ENCODE measurements at regions of chr1 and their contacts with region 1.

Region 1: DNA sequence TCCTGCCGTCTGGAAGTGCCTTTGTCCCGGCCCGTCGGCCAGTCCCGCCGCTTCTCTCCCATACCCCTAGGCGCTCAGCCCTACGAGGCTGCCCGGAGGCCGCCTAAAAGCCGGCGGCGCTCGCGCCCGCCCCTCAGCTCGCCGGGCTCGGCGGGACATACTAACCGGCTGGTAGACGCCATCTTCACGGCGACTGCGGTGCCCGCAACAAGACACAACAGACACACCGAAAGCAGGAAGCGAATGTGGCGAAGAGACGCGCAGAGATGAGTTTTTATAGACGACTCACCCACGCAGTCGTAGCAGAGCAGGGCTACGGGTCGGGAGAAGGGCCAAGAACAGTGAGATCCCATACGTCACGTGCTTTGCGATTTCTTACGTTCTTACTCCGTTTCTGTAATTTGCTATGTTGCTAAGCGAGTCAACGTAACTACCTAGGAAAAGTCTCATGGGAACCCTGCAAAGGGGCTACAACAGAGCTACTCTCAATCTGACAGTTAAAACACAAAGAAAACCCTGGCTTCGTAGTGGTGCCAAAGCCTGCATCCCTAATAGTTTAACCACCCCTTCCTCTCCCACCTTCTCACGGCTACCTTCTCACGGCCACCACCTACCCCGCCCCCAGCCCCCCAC is at the start of gene GTF2B:
- DNase-seq: peak; percentile 86 to 96 (median 94)
- ATAC-seq: peak; percentile 97
- H3K4me3 ChIP-seq: peak within 1 kb of the TSS; percentile 86
- H3K4me3 Mint-ChIP-seq: peak within 1 kb of the TSS; percentile 87 to 99 (median 95)
- H3K27ac ChIP-seq: peak within 1 kb of the TSS; percentile 91
- H3K27ac Mint-ChIP-seq: peak within 1 kb of the TSS; percentile 93 to 98 (median 97)
- H3K4me1 ChIP-seq: peaks cover 26 to 27% of the 10 kb centered on the region in 2 donors
- H3K4me1 Mint-ChIP-seq: peaks cover 23 to 59% (median 48%) of the 10 kb centered on the region in 7 donors
- H3K27me3 ChIP-seq: no peaks in the 10 kb centered on the region
- H3K27me3 Mint-ChIP-seq: peaks cover 0 to 2% (median 0%) of the 10 kb centered on the region in 5 donors
- total RNA-seq, gene GTF2B: 41.3 to 53.6 (median 47.3) TPM

Region 2: DNA sequence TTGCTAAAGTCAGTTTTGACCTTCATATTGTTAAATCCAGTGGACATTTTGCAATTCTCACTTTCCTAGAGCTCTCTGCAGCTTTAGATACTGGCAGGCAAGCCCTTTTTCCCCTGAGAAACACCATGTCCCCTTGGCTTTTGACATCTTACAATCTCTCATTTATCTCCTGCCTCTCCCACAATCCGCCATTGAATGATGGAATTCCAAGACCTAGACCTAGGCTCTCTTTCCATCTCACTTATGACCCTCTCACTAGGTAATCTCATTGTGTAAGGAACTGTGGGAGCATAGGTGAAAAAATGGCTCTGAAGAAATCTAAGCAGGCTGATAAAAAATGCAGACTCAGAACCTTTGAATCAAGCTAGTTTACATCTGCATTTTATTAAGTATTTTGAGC is 99.0 kb after region 1 on chr1:
- CTCF ChIA-PET with region 1: no interaction called
- POLR2A ChIA-PET with region 1: interaction called, 4 read pairs
- intact Hi-C with region 1: loop called in 1 of 2 experiments (anchors 1 kb)
- DNase-seq: no peak
- ATAC-seq: no peak
- H3K4me3 ChIP-seq: no peak overlapping the region
- H3K4me3 Mint-ChIP-seq: peak overlapping the region in 4 of 10 donors; percentile 1 to 42 (median 23)
- H3K27ac ChIP-seq: no peak overlapping the region
- H3K27ac Mint-ChIP-seq: peak overlapping the region in 6 of 9 donors; percentile 61 to 90 (median 78)
- H3K4me1 ChIP-seq: peaks cover 15 to 28% of the 10 kb centered on the region in 2 donors
- H3K4me1 Mint-ChIP-seq: peaks cover 24 to 56% (median 45%) of the 10 kb centered on the region in 7 donors
- H3K27me3 ChIP-seq: no peaks in the 10 kb centered on the region
- H3K27me3 Mint-ChIP-seq: no peaks in the 10 kb centered on the region

Region 3: GRCh38 chr1:89243046-89243445 is 351.6 kb after region 1 on chr1:
- CTCF ChIA-PET with region 1: no interaction called
- POLR2A ChIA-PET with region 1: no interaction called
- intact Hi-C with region 1: no loop called
- DNase-seq: no peak
- ATAC-seq: no peak
- H3K4me3 ChIP-seq: no peak overlapping the region
- H3K4me3 Mint-ChIP-seq: no peak overlapping the region
- H3K27ac ChIP-seq: no peak overlapping the region
- H3K27ac Mint-ChIP-seq: no peak overlapping the region
- H3K4me1 ChIP-seq: peaks cover 0 to 4% of the 10 kb centered on the region in 2 donors
- H3K4me1 Mint-ChIP-seq: peaks cover 11 to 40% (median 23%) of the 10 kb centered on the region in 7 donors
- H3K27me3 ChIP-seq: no peaks in the 10 kb centered on the region
- H3K27me3 Mint-ChIP-seq: no peaks in the 10 kb centered on the region

Region 4: GRCh38 chr1:89994805-89995597 is 1103.6 kb after region 1 on chr1 and contains the start of gene ZNF326:
- CTCF ChIA-PET with region 1: no interaction called
- POLR2A ChIA-PET with region 1: interaction called, 3 read pairs
- intact Hi-C with region 1: loop called (anchors 1 to 2 kb)
- DNase-seq: peak; percentile 88 to 99 (median 93)
- ATAC-seq: peak; percentile 98
- H3K4me3 ChIP-seq: peak within 1 kb of the TSS; percentile 86
- H3K4me3 Mint-ChIP-seq: peak within 1 kb of the TSS; percentile 91 to 100 (median 99)
- H3K27ac ChIP-seq: peak within 1 kb of the TSS; percentile 85
- H3K27ac Mint-ChIP-seq: peak within 1 kb of the TSS; percentile 90 to 98 (median 96)
- H3K4me1 ChIP-seq: peaks cover 8 to 14% of the 10 kb centered on the region in 2 donors
- H3K4me1 Mint-ChIP-seq: peaks cover 28 to 47% (median 43%) of the 10 kb centered on the region in 7 donors
- H3K27me3 ChIP-seq: no peaks in the 10 kb centered on the region
- H3K27me3 Mint-ChIP-seq: peaks cover 0 to 7% (median 4%) of the 10 kb centered on the region in 5 donors
- total RNA-seq, gene ZNF326: 17.3 to 52.5 (median 23.5) TPM